ENCODE measurements at regions of chr5 and their contacts with region 1.

Region 1: DNA sequence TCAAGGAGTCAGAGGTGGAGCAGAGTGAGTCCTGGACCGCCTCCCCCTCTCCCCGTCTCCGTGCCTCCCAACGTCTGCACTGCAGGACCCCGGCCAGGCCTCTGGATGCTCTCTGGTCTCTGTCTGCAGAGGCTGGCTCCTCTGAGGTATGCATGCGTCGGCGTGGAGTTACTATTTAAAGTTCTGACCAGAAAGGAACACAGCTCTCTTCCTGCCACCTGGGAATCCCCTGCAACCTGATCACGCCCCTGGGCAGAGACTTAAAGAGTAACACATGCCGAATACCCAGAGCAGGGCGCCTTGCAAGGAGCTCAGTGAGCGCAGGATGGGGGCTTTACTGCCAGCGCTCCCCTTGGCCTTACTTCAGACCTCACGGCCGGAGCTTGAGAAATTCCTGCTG is 16.0 kb downstream of the ANXA6 start:
- DNase-seq: peak; percentile 84
- H3K4me3 ChIP-seq: peak overlapping the region; percentile 60
- H3K27ac ChIP-seq: peak overlapping the region; percentile 57
- H3K4me1 ChIP-seq: peaks cover 93% of the 10 kb centered on the region
- CTCF ChIP-seq: no peak

Region 2: DNA sequence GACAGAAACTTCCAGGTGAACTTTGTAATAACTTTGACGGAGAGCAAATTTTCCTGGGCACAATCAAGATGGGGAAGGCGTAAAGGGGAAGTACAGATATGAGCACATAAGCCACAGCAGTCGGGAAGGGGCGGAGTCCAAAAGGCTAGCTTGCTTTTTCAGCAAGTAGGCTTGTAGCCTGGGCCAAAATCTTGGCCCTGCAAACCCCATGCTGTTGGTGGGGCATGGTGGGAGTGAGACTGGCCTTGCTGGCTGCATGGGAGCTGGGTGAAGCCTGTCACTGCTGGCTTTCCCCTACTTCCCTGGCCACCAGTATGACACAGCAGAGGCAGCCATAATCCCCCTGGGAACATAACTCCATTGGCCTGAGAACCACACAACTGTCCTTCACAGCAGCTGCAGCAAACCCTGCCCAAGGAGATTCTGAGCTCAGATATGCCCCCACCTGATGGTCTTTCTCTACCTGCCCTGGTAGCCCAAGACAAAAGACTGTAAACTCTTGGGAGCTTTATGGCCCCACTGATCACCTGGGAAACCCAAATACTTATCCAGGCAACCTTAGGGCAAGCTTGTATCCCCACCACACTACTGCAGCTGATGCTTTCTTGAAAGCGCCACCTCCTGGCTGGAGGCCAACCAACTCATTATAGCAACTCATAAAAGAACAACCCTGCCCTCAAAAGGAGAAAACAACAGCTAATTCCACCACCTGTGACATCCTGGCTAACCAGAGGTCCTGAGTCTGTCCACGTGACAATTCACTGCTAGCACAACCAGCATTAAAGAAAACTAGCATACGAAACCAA is 406.8 kb before region 1 on chr5:
- CTCF ChIA-PET with region 1: no interaction called
- POLR2A ChIA-PET with region 1: no interaction called
- intact Hi-C with region 1: no loop called
- DNase-seq: peak; percentile 14
- H3K4me3 ChIP-seq: no peak overlapping the region
- H3K27ac ChIP-seq: no peak overlapping the region
- H3K4me1 ChIP-seq: peaks cover 6% of the 10 kb centered on the region
- CTCF ChIP-seq: peak; percentile 62

Region 3: GRCh38 chr5:151157426-151158286 is 16.1 kb after region 1 on chr5 and contains the start of gene ANXA6:
- CTCF ChIA-PET with region 1: interaction called, 3 read pairs
- POLR2A ChIA-PET with region 1: interaction called, 13 read pairs
- intact Hi-C with region 1: no loop called
- DNase-seq: no peak
- H3K4me3 ChIP-seq: peak within 1 kb of the TSS; percentile 59
- H3K27ac ChIP-seq: peak within 1 kb of the TSS; percentile 68
- H3K4me1 ChIP-seq: peaks cover 72% of the 10 kb centered on the region
- CTCF ChIP-seq: no peak
- total RNA-seq, gene ANXA6: 26.1 and 35.6 TPM in 2 replicates

Region 4: GRCh38 chr5:151183451-151184245 is 42.1 kb after region 1 on chr5:
- CTCF ChIA-PET with region 1: no interaction called
- POLR2A ChIA-PET with region 1: no interaction called
- intact Hi-C with region 1: no loop called
- DNase-seq: no peak
- H3K4me3 ChIP-seq: no peak overlapping the region
- H3K27ac ChIP-seq: no peak overlapping the region
- H3K4me1 ChIP-seq: peaks cover 4% of the 10 kb centered on the region
- CTCF ChIP-seq: no peak